ENCODE measurements at regions of chr9 and their contacts with region 1.

Region 1: DNA sequence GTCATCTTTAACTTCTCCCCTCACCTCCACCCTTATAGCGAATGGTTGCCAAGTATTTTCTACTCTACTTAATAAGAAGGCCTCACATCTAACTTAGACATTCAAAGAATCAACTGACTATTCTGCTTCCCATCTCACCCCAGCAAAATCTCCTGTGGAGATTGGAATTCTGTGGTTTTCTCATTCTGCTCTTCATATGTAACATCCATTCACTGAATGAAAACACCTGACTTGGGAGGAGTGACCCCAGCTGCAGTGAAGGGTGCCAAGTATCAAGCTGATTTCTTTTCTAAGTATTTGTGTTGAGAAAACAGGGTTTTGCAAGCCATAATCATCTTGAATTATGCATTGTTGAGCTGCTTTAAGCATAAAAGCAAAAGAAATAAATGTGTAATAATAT is 42.5 kb upstream of the TAF1L start:
- DNase-seq: no peak
- ATAC-seq: no peak
- H3K4me3 ChIP-seq: no peak overlapping the region
- H3K27ac ChIP-seq: no peak overlapping the region
- H3K4me1 ChIP-seq: no peaks in the 10 kb centered on the region
- H3K27me3 ChIP-seq: no peaks in the 10 kb centered on the region
- CTCF ChIP-seq: no peak
- POLR2A ChIP-seq: no peak

Region 2: GRCh38 chr9:32716946-32717543 is 39.1 kb after region 1 on chr9:
- intact Hi-C with region 1: loop called in 2 of 10 experiments (anchors 5 kb)
- DNase-seq: no peak
- ATAC-seq: no peak
- H3K4me3 ChIP-seq: no peak overlapping the region
- H3K27ac ChIP-seq: no peak overlapping the region
- H3K4me1 ChIP-seq: no peaks in the 10 kb centered on the region
- H3K27me3 ChIP-seq: no peaks in the 10 kb centered on the region
- CTCF ChIP-seq: no peak
- POLR2A ChIP-seq: no peak

Measured in heart left ventricle (tissue), 16 donors.